BJ (cell line): ENCODE measurements at regions of chr17 and their contacts with region 1.

Region 1: DNA sequence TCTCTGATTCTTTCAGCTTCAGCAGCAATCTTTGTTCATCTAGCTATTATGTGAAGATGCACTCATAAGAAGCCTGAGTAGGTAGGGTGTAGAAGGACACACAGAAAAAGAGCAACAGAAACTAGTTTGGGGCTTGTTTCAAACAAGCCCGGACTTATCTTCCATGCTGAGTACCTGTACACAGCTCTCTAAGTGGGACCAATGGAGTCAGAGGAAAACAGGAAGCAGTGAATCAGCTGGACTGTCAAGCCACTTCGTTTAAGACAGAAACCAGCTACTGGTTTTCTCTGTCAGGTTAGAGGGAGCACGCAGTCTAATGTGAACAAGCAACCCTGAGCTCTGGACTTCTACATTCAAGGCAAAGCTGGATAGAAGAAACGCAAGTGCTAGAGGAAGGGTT is 16.0 kb downstream of the MAP2K6 start:
- DNase-seq: no peak
- H3K4me3 ChIP-seq: no peak overlapping the region
- H3K27me3 ChIP-seq: no peaks in the 10 kb centered on the region; the same call in 1 of the 2 replicates
- CTCF ChIP-seq: no peak

Region 2: GRCh38 chr17:69417545-69418483 is 12.7 kb before region 1 on chr17:
- CTCF ChIA-PET with region 1: interaction called, 13 read pairs
- POLR2A ChIA-PET with region 1: interaction called, 4 read pairs
- DNase-seq: no peak
- H3K4me3 ChIP-seq: no peak overlapping the region
- H3K27me3 ChIP-seq: no peaks in the 10 kb centered on the region
- CTCF ChIP-seq: no peak